GM12878 (cell line): ENCODE measurements at regions of chr20 and their contacts with region 1.

Region 1: GRCh38 chr20:15986690-15987089 is 586.6 kb downstream of the KIF16B start:
- DNase-seq: peak; percentile 72
- ATAC-seq: peak; percentile 92
- H3K4me3 ChIP-seq: peak overlapping the region; percentile 91
- H3K27ac ChIP-seq: peak overlapping the region; percentile 74
- H3K4me1 ChIP-seq: no peaks in the 10 kb centered on the region; the same call in 1 of the 2 replicates
- H3K27me3 ChIP-seq: no peaks in the 10 kb centered on the region
- CTCF ChIP-seq: no peak
- EP300 ChIP-seq: peak; percentile 68; a peak in 2 of 4 replicates
- POLR2A ChIP-seq: no peak
- RAD21 ChIP-seq: no peak

Region 2: GRCh38 chr20:15654208-15654645 is 332.5 kb before region 1 on chr20:
- CTCF ChIA-PET with region 1: no interaction called
- POLR2A ChIA-PET with region 1: no interaction called
- RAD21 ChIA-PET with region 1: no interaction called
- SMC1A ChIA-PET with region 1: no interaction called
- in situ Hi-C with region 1: no loop called
- intact Hi-C with region 1: no loop called
- DNase-seq: peak; percentile 43
- ATAC-seq: peak; percentile 98
- H3K4me3 ChIP-seq: no peak overlapping the region
- H3K27ac ChIP-seq: no peak overlapping the region
- H3K4me1 ChIP-seq: peaks cover 4% of the 10 kb centered on the region
- H3K27me3 ChIP-seq: no peaks in the 10 kb centered on the region
- CTCF ChIP-seq: peak; percentile 69 to 82 (median 71); a peak in 5 of 6 replicates
- EP300 ChIP-seq: no peak
- POLR2A ChIP-seq: no peak
- RAD21 ChIP-seq: peak; percentile 84

Region 3: GRCh38 chr20:15842872-15843271 is 143.8 kb before region 1 on chr20:
- CTCF ChIA-PET with region 1: no interaction called
- POLR2A ChIA-PET with region 1: no interaction called
- RAD21 ChIA-PET with region 1: no interaction called
- SMC1A ChIA-PET with region 1: no interaction called
- in situ Hi-C with region 1: no loop called
- intact Hi-C with region 1: loop called (anchors 2 kb)
- DNase-seq: no peak
- ATAC-seq: peak; percentile 84
- H3K4me3 ChIP-seq: no peak overlapping the region
- H3K27ac ChIP-seq: no peak overlapping the region
- H3K4me1 ChIP-seq: no peaks in the 10 kb centered on the region
- H3K27me3 ChIP-seq: no peaks in the 10 kb centered on the region
- CTCF ChIP-seq: peak; percentile 23 to 46 (median 27); a peak in 3 of 6 replicates
- EP300 ChIP-seq: no peak
- POLR2A ChIP-seq: no peak
- RAD21 ChIP-seq: peak; percentile 36

Region 4: GRCh38 chr20:15923030-15923776 is 63.5 kb before region 1 on chr20:
- CTCF ChIA-PET with region 1: no interaction called
- POLR2A ChIA-PET with region 1: no interaction called
- RAD21 ChIA-PET with region 1: no interaction called
- SMC1A ChIA-PET with region 1: no interaction called
- in situ Hi-C with region 1: no loop called
- intact Hi-C with region 1: loop called (anchors 2 kb)
- DNase-seq: peak; percentile 54
- ATAC-seq: peak; percentile 83
- H3K4me3 ChIP-seq: peak overlapping the region; percentile 37; the same call in 1 of the 2 replicates
- H3K27ac ChIP-seq: no peak overlapping the region
- H3K4me1 ChIP-seq: peaks cover 20% of the 10 kb centered on the region
- H3K27me3 ChIP-seq: no peaks in the 10 kb centered on the region
- CTCF ChIP-seq: no peak
- EP300 ChIP-seq: no peak; a peak in 1 of 4 replicates
- POLR2A ChIP-seq: no peak
- RAD21 ChIP-seq: no peak

Region 5: GRCh38 chr20:15951658-15952057 is 35.0 kb before region 1 on chr20:
- CTCF ChIA-PET with region 1: no interaction called
- POLR2A ChIA-PET with region 1: no interaction called
- RAD21 ChIA-PET with region 1: no interaction called
- SMC1A ChIA-PET with region 1: no interaction called
- in situ Hi-C with region 1: no loop called
- intact Hi-C with region 1: no loop called
- DNase-seq: no peak
- ATAC-seq: no peak
- H3K4me3 ChIP-seq: no peak overlapping the region
- H3K27ac ChIP-seq: no peak overlapping the region
- H3K4me1 ChIP-seq: no peaks in the 10 kb centered on the region
- H3K27me3 ChIP-seq: no peaks in the 10 kb centered on the region
- CTCF ChIP-seq: no peak
- EP300 ChIP-seq: no peak
- POLR2A ChIP-seq: no peak
- RAD21 ChIP-seq: no peak

Region 6: GRCh38 chr20:16314320-16314719 is 327.6 kb after region 1 on chr20:
- CTCF ChIA-PET with region 1: no interaction called
- POLR2A ChIA-PET with region 1: no interaction called
- RAD21 ChIA-PET with region 1: interaction called, 4 read pairs
- SMC1A ChIA-PET with region 1: no interaction called
- in situ Hi-C with region 1: no loop called
- intact Hi-C with region 1: loop called (anchors 5 kb)
- DNase-seq: peak; percentile 69
- ATAC-seq: peak; percentile 78
- H3K4me3 ChIP-seq: peak overlapping the region; percentile 25; the same call in 1 of the 2 replicates
- H3K27ac ChIP-seq: no peak overlapping the region; the same call in 1 of the 2 replicates
- H3K4me1 ChIP-seq: peaks cover 21% of the 10 kb centered on the region
- H3K27me3 ChIP-seq: no peaks in the 10 kb centered on the region
- CTCF ChIP-seq: no peak
- EP300 ChIP-seq: no peak
- POLR2A ChIP-seq: no peak
- RAD21 ChIP-seq: no peak

Region 7: GRCh38 chr20:16476032-16476431 is 489.3 kb after region 1 on chr20:
- CTCF ChIA-PET with region 1: no interaction called
- POLR2A ChIA-PET with region 1: no interaction called
- RAD21 ChIA-PET with region 1: no interaction called
- SMC1A ChIA-PET with region 1: no interaction called
- in situ Hi-C with region 1: no loop called
- intact Hi-C with region 1: loop called (anchors 10 kb)
- DNase-seq: peak; percentile 28
- ATAC-seq: peak; percentile 81
- H3K4me3 ChIP-seq: no peak overlapping the region
- H3K27ac ChIP-seq: no peak overlapping the region
- H3K4me1 ChIP-seq: no peaks in the 10 kb centered on the region
- H3K27me3 ChIP-seq: no peaks in the 10 kb centered on the region
- CTCF ChIP-seq: peak; percentile 55 to 71 (median 55)
- EP300 ChIP-seq: no peak
- POLR2A ChIP-seq: no peak
- RAD21 ChIP-seq: peak; percentile 82